Caco-2 (cell line): ENCODE measurements at regions of chr5 and their contacts with region 1.

Region 1: DNA sequence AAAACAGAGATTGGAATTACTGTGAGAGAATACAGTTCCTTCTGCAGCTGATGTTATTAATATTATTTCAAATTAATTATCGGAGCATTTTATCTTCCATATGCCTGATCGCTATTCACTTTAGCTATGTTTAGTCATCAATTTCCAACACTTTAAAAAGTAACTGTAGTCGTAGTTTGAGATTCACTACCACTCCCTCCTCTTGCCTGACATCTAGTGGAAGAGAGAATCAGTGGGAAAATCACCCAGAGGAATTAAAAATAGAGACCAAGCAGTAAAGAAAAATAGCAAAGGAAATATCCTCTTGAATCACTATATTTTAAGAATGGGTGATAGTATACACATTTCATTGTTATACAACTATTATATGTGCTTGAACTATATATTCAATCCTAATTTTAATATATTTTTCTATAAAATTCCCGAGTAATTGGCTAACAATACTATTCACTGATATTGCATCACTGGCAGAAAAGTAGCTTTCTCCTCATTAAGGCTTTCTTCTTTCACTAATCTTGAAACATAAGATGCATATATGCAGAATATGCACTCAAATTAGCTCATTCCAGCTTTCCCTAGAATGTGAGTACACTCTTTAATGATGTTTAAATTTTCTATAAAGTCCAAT is 708.7 kb downstream of the CDH9 start:
- DNase-seq: peak in 1 of 2 experiments; percentile 23
- H3K4me3 ChIP-seq: no peak overlapping the region
- H3K4me3 Mint-ChIP-seq: no peak overlapping the region
- H3K27ac Mint-ChIP-seq: no peak overlapping the region
- H3K4me1 ChIP-seq: no peaks in the 10 kb centered on the region
- H3K4me1 Mint-ChIP-seq: no peaks in the 10 kb centered on the region
- H3K27me3 ChIP-seq: no peaks in the 10 kb centered on the region
- H3K27me3 Mint-ChIP-seq: no peaks in the 10 kb centered on the region
- CTCF ChIP-seq: peak in 1 of 2 experiments; percentile 57

Region 2: DNA sequence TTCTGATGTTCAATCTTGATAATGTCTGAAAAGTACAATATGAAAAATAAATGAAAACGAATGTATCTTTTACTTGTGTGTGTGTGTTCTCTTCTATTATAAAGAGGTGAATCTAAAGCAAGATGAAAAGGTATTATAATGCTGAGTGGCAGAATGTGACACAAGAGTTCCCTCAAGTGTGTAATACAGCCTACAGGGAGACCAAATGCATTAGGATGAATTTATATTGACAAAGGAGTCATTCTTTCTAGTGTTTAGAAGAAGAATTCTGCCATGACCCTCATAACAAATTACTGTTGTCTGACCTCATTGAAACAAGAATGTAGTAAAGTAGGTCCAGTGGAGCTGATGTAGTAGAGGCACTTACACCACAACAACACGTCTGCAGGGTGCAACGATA is 565.9 kb before region 1 on chr5:
- CTCF ChIA-PET with region 1: no interaction called
- POLR2A ChIA-PET with region 1: no interaction called
- intact Hi-C with region 1: loop called (anchors 5 kb)
- DNase-seq: no peak
- H3K4me3 ChIP-seq: no peak overlapping the region
- H3K4me3 Mint-ChIP-seq: no peak overlapping the region
- H3K27ac Mint-ChIP-seq: no peak overlapping the region
- H3K4me1 ChIP-seq: no peaks in the 10 kb centered on the region
- H3K4me1 Mint-ChIP-seq: no peaks in the 10 kb centered on the region
- H3K27me3 ChIP-seq: no peaks in the 10 kb centered on the region
- H3K27me3 Mint-ChIP-seq: no peaks in the 10 kb centered on the region
- CTCF ChIP-seq: no peak

Region 3: GRCh38 chr5:26024774-26025173 is 304.9 kb before region 1 on chr5:
- CTCF ChIA-PET with region 1: no interaction called
- POLR2A ChIA-PET with region 1: no interaction called
- intact Hi-C with region 1: loop called (anchors 2 kb)
- DNase-seq: peak in 1 of 2 experiments; percentile 29
- H3K4me3 ChIP-seq: no peak overlapping the region
- H3K4me3 Mint-ChIP-seq: no peak overlapping the region
- H3K27ac Mint-ChIP-seq: no peak overlapping the region
- H3K4me1 ChIP-seq: no peaks in the 10 kb centered on the region
- H3K4me1 Mint-ChIP-seq: no peaks in the 10 kb centered on the region
- H3K27me3 ChIP-seq: no peaks in the 10 kb centered on the region
- H3K27me3 Mint-ChIP-seq: no peaks in the 10 kb centered on the region
- CTCF ChIP-seq: peak; percentile 32 to 48

Region 4: DNA sequence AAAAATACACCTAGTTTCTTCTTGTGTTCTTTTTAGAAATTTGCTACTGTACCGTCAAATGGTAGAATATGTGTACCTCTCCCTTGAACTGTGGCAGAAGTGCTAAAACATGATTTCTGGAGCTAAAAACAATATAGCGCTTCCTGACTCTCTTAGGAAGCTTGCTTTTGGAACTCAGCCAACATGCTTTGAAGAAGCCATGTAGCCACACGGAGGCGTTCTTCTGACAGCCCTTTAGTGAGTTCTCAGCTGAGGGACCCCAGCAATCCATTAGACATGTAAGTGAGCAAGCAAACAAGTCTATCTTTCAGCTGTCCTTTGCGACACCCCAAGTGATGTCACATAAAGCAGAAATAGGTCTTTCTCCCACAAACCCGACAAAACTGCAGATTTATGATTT is 208.3 kb before region 1 on chr5:
- CTCF ChIA-PET with region 1: no interaction called
- POLR2A ChIA-PET with region 1: no interaction called
- intact Hi-C with region 1: loop called (anchors 10 kb)
- DNase-seq: peak in 1 of 2 experiments; percentile 3
- H3K4me3 ChIP-seq: no peak overlapping the region
- H3K4me3 Mint-ChIP-seq: no peak overlapping the region
- H3K27ac Mint-ChIP-seq: no peak overlapping the region
- H3K4me1 ChIP-seq: no peaks in the 10 kb centered on the region
- H3K4me1 Mint-ChIP-seq: no peaks in the 10 kb centered on the region
- H3K27me3 ChIP-seq: no peaks in the 10 kb centered on the region
- H3K27me3 Mint-ChIP-seq: no peaks in the 10 kb centered on the region
- CTCF ChIP-seq: no peak

Region 5: GRCh38 chr5:26582350-26583046 is 252.8 kb after region 1 on chr5:
- CTCF ChIA-PET with region 1: no interaction called
- POLR2A ChIA-PET with region 1: no interaction called
- intact Hi-C with region 1: no loop called
- DNase-seq: no peak
- H3K4me3 ChIP-seq: no peak overlapping the region
- H3K4me3 Mint-ChIP-seq: no peak overlapping the region
- H3K27ac Mint-ChIP-seq: no peak overlapping the region
- H3K4me1 ChIP-seq: no peaks in the 10 kb centered on the region
- H3K4me1 Mint-ChIP-seq: no peaks in the 10 kb centered on the region
- H3K27me3 ChIP-seq: no peaks in the 10 kb centered on the region
- H3K27me3 Mint-ChIP-seq: no peaks in the 10 kb centered on the region
- CTCF ChIP-seq: no peak